ENCODE measurements at regions of chr13 and their contacts with region 1.

Region 1: DNA sequence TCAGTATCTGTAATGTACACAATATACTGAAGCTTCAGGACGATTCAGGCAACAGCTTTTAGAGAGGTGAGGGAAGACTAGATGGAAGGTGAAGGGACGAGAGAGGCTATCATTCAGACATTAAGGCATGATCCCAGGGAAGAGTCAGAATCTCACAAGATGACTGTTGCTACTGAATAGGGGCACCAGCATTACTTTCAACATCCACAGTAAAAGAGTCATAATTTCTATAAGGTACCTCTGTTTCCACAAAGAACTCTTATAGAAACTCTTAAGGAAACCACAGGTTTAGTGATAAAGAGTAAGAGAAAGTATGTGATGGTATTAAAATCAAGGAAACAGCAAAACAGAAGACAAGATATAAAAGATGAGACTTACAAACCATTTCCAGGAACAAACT is 23.0 kb downstream of the LCP1 start:
- DNase-seq: no peak
- H3K4me3 ChIP-seq: no peak overlapping the region
- H3K27ac ChIP-seq: no peak overlapping the region
- H3K27me3 ChIP-seq: no peaks in the 10 kb centered on the region
- CTCF ChIP-seq: no peak

Region 2: GRCh38 chr13:44191504-44192171 is 1967.3 kb before region 1 on chr13:
- intact Hi-C with region 1: no loop called
- DNase-seq: peak in 6 of 10 donors; percentile 40 to 76 (median 44)
- H3K4me3 ChIP-seq: peak overlapping the region in 18 of 59 donors; percentile 0 to 43 (median 27)
- H3K27ac ChIP-seq: peak overlapping the region; percentile 17 to 90 (median 76)
- H3K27me3 ChIP-seq: no peaks in the 10 kb centered on the region
- CTCF ChIP-seq: peak; percentile 42 to 82 (median 71)

Region 3: GRCh38 chr13:46211483-46212351 is 52.7 kb after region 1 on chr13 and contains the start of gene LRRC63:
- intact Hi-C with region 1: loop called in 1 of 2 experiments (anchors 5 kb)
- DNase-seq: peak; percentile 30 to 90 (median 82)
- H3K4me3 ChIP-seq: peak within 1 kb of the TSS; percentile 48 to 83 (median 66)
- H3K27ac ChIP-seq: peak within 1 kb of the TSS in 50 of 59 donors; percentile 6 to 85 (median 62)
- H3K27me3 ChIP-seq: no peaks in the 10 kb centered on the region
- CTCF ChIP-seq: peak in 12 of 56 donors; percentile 2 to 38 (median 16)
- total RNA-seq, gene LRRC63: 0.32 to 11.2 (median 2.6) TPM